HEK293 (cell line): ENCODE measurements at regions of chr6 and their contacts with region 1.

Region 1: DNA sequence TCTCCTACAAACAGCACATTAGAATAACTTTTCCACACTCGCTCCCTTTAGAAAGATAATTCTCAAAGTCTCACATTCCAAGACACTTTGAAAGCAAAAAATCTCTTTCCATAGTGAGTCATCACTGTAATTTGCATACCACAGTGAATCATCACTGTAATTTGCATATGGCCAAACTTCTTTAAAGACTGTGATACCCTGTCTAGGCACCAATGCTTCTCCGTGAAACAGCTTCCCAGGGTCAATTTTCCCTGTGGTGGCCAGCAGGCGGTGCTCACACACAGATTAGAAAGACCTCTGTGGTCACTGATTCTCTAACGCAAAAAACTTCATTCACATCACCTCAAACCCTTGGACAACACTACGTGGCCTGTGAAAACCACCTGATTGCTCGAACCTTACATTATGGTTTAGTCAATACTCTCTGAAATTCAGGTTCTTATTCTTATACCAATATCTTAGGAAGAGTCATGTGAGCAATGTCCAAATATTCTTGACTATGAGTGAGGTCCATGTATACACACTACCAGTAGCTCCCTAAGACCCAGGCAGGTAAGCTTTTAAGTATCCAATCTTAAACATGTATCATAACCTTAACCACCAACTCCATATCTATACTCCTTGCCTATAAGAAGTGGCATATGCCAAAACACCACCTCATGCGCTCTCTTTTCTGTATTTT is 78.5 kb upstream of the PHACTR1 start:
- H3K4me3 ChIP-seq: no peak overlapping the region
- H3K27ac ChIP-seq: no peak overlapping the region
- H3K4me1 ChIP-seq: no peaks in the 10 kb centered on the region
- CTCF ChIP-seq: peak; percentile 42; the same call in 1 of the 2 replicates

Region 2: GRCh38 chr6:12845224-12846004 is 207.3 kb after region 1 on chr6:
- CTCF ChIA-PET with region 1: interaction called, 10 read pairs
- POLR2A ChIA-PET with region 1: no interaction called
- H3K4me3 ChIP-seq: no peak overlapping the region
- H3K27ac ChIP-seq: no peak overlapping the region
- H3K4me1 ChIP-seq: no peaks in the 10 kb centered on the region
- CTCF ChIP-seq: no peak

Region 3: DNA sequence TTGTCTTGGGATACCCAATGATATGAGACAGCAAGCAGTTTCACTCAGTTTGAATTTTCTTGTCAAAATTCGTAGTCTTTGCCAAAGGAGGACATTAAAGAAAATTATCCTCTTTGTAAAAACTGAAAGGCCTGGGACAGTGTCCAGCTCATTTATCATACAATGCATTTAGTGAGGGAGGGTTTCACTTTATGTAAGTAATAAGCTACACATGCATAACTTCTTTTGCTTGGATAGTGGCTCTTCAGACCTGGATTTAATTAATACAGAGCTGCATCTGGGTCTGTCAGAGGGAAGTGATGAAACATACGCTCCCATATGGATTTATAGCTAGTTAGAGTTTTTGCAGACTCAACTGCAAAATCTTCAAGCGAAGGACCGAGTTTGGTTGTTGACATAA is 254.1 kb after region 1 on chr6:
- CTCF ChIA-PET with region 1: interaction called, 78 read pairs
- POLR2A ChIA-PET with region 1: interaction called, 3 read pairs
- H3K4me3 ChIP-seq: no peak overlapping the region
- H3K27ac ChIP-seq: no peak overlapping the region
- H3K4me1 ChIP-seq: no peaks in the 10 kb centered on the region
- CTCF ChIP-seq: no peak

Region 4: GRCh38 chr6:12899046-12899833 is 261.1 kb after region 1 on chr6:
- CTCF ChIA-PET with region 1: interaction called, 78 read pairs
- POLR2A ChIA-PET with region 1: interaction called, 3 read pairs
- H3K4me3 ChIP-seq: no peak overlapping the region
- H3K27ac ChIP-seq: no peak overlapping the region
- H3K4me1 ChIP-seq: no peaks in the 10 kb centered on the region
- CTCF ChIP-seq: no peak